Activated CD8-positive, alpha-beta memory T cell treated with anti-CD3 and anti-CD28 coated beads, Interleukin-2, amount 10 ng/mL, durations not matched to agents 7 days and 5 days (primary cell): ENCODE measurements at regions of chr9 and their contacts with region 1.

Region 1: GRCh38 chr9:89536145-89536574 is 38.2 kb upstream of the SEMA4D start:
- DNase-seq: peak; percentile 61
- ATAC-seq: peak; percentile 83
- H3K4me3 Mint-ChIP-seq: peak overlapping the region; percentile 21
- H3K27ac Mint-ChIP-seq: peak overlapping the region; percentile 97
- H3K4me1 Mint-ChIP-seq: peaks cover 79% of the 10 kb centered on the region
- H3K27me3 Mint-ChIP-seq: no peaks in the 10 kb centered on the region

Region 2: GRCh38 chr9:89497978-89498851 is 37.9 kb before region 1 on chr9 and contains the start of gene SEMA4D:
- CTCF ChIA-PET with region 1: interaction called, 13 read pairs
- DNase-seq: peak; percentile 80
- ATAC-seq: peak; percentile 15
- H3K4me3 Mint-ChIP-seq: peak within 1 kb of the TSS; percentile 94
- H3K27ac Mint-ChIP-seq: peak within 1 kb of the TSS; percentile 93
- H3K4me1 Mint-ChIP-seq: peaks cover 80% of the 10 kb centered on the region
- H3K27me3 Mint-ChIP-seq: no peaks in the 10 kb centered on the region
- total RNA-seq, gene SEMA4D: 408 to 525 TPM

Region 3: DNA sequence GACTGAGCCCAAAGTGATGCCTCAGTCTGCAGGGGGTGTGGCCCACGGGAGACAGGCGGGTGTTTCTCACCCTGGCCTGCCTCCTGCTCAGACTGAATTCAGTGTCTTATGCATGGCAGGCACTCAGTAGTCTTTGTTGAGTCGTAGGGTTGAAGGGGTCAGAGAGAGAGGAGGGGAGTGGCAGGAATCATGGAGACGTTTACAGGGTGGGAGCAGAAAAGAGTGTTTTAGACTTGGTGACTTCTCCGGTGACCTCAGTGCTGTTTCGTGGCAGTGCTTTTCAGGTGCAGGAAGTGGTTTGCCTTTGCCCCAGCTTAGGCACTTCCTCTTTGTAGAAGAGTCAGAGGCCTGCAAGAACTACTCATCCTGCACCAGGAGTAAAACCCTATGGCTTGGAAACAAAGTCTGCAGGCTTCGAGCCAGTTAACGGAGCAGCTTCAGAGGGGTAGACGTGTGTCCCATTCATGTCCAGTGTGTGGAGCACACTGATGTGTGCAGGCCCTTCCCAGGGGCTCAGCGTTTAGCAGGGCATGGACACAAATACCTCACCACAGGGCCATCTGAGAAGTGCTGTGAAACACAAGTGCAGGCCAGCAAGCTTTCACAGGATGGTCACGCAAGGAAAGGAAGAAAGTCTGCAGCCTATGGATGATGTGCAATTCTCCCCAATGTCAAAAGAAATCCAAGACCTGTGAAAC is 13.8 kb before region 1 on chr9:
- CTCF ChIA-PET with region 1: interaction called, 38 read pairs
- DNase-seq: peak; percentile 94
- ATAC-seq: peak; percentile 93
- H3K4me3 Mint-ChIP-seq: peak overlapping the region; percentile 56
- H3K27ac Mint-ChIP-seq: peak overlapping the region; percentile 96
- H3K4me1 Mint-ChIP-seq: peaks cover 97% of the 10 kb centered on the region
- H3K27me3 Mint-ChIP-seq: no peaks in the 10 kb centered on the region

Region 4: DNA sequence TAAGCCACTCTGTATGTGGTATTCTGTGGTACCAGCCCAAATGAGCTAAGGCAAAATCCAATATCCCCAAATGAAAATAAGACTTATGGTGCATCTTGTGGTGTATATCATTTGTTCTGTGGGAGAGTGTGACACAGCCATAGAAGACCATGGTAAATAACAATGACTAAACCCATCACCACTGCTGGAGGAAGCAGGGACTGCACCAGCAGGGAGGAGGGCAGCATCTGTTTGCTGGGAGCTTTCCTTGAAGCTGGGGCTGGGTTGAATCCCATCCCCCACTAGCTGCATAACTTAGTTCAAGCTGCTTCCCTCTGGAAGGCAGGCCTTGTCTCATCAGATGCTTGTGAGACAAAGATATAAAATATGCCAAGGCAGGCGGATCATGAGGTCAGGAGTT is 82.9 kb after region 1 on chr9:
- CTCF ChIA-PET with region 1: no interaction called
- DNase-seq: no peak
- ATAC-seq: no peak
- H3K4me3 Mint-ChIP-seq: no peak overlapping the region
- H3K27ac Mint-ChIP-seq: no peak overlapping the region
- H3K4me1 Mint-ChIP-seq: peaks cover 12% of the 10 kb centered on the region
- H3K27me3 Mint-ChIP-seq: peaks cover 28% of the 10 kb centered on the region